WTC11 (cell line): ENCODE measurements at regions of chr2 and their contacts with region 1.

Region 1: GRCh38 chr2:60439219-60439974 is 114.1 kb downstream of the BCL11A start:
- DNase-seq: peak; percentile 49
- ATAC-seq: peak; percentile 68
- H3K4me3 Mint-ChIP-seq: no peak overlapping the region
- H3K27ac Mint-ChIP-seq: no peak overlapping the region
- H3K4me1 Mint-ChIP-seq: peaks cover 50% of the 10 kb centered on the region
- H3K27me3 Mint-ChIP-seq: peaks cover 16% of the 10 kb centered on the region
- CTCF ChIP-seq: peak; percentile 39

Region 2: GRCh38 chr2:60337140-60337494 is 102.3 kb before region 1 on chr2:
- CTCF ChIA-PET with region 1: interaction called, 12 read pairs
- POLR2A ChIA-PET with region 1: no interaction called
- DNase-seq: peak; percentile 52
- ATAC-seq: peak; percentile 88
- H3K4me3 Mint-ChIP-seq: no peak overlapping the region
- H3K27ac Mint-ChIP-seq: no peak overlapping the region
- H3K4me1 Mint-ChIP-seq: peaks cover 10% of the 10 kb centered on the region
- H3K27me3 Mint-ChIP-seq: no peaks in the 10 kb centered on the region; the same call in 1 of the 2 replicates
- CTCF ChIP-seq: no peak